ENCODE measurements at regions of chr2 and their contacts with region 1.

Region 1: GRCh38 chr2:102005989-102006885 is 14.5 kb downstream of the IL1R2 start:
- DNase-seq: peak; percentile 67
- H3K4me3 ChIP-seq: no peak overlapping the region
- H3K27ac ChIP-seq: no peak overlapping the region
- H3K4me1 ChIP-seq: no peaks in the 10 kb centered on the region
- H3K27me3 ChIP-seq: no peaks in the 10 kb centered on the region
- CTCF ChIP-seq: peak; percentile 67

Region 2: GRCh38 chr2:101473911-101474701 is 532.1 kb before region 1 on chr2:
- intact Hi-C with region 1: no loop called
- DNase-seq: peak; percentile 27
- H3K4me3 ChIP-seq: peak overlapping the region; percentile 53
- H3K27ac ChIP-seq: no peak overlapping the region
- H3K4me1 ChIP-seq: no peaks in the 10 kb centered on the region
- H3K27me3 ChIP-seq: peaks cover 5% of the 10 kb centered on the region
- CTCF ChIP-seq: no peak

Region 3: GRCh38 chr2:101679037-101679726 is 327.1 kb before region 1 on chr2:
- intact Hi-C with region 1: no loop called
- DNase-seq: no peak
- H3K4me3 ChIP-seq: no peak overlapping the region
- H3K27ac ChIP-seq: no peak overlapping the region
- H3K4me1 ChIP-seq: no peaks in the 10 kb centered on the region
- H3K27me3 ChIP-seq: no peaks in the 10 kb centered on the region
- CTCF ChIP-seq: no peak

Region 4: GRCh38 chr2:101883863-101884262 is 122.4 kb before region 1 on chr2:
- intact Hi-C with region 1: loop called (anchors 5 kb)
- DNase-seq: peak; percentile 50
- H3K4me3 ChIP-seq: no peak overlapping the region
- H3K27ac ChIP-seq: no peak overlapping the region
- H3K4me1 ChIP-seq: no peaks in the 10 kb centered on the region
- H3K27me3 ChIP-seq: no peaks in the 10 kb centered on the region
- CTCF ChIP-seq: peak; percentile 50

Region 5: GRCh38 chr2:102342891-102343290 is 336.7 kb after region 1 on chr2:
- intact Hi-C with region 1: loop called (anchors 10 kb)
- DNase-seq: no peak
- H3K4me3 ChIP-seq: no peak overlapping the region
- H3K27ac ChIP-seq: no peak overlapping the region
- H3K4me1 ChIP-seq: no peaks in the 10 kb centered on the region
- H3K27me3 ChIP-seq: no peaks in the 10 kb centered on the region
- CTCF ChIP-seq: no peak